Astrocyte of the cerebellum (primary cell): ENCODE measurements at regions of chr5 and their contacts with region 1.

Region 1: DNA sequence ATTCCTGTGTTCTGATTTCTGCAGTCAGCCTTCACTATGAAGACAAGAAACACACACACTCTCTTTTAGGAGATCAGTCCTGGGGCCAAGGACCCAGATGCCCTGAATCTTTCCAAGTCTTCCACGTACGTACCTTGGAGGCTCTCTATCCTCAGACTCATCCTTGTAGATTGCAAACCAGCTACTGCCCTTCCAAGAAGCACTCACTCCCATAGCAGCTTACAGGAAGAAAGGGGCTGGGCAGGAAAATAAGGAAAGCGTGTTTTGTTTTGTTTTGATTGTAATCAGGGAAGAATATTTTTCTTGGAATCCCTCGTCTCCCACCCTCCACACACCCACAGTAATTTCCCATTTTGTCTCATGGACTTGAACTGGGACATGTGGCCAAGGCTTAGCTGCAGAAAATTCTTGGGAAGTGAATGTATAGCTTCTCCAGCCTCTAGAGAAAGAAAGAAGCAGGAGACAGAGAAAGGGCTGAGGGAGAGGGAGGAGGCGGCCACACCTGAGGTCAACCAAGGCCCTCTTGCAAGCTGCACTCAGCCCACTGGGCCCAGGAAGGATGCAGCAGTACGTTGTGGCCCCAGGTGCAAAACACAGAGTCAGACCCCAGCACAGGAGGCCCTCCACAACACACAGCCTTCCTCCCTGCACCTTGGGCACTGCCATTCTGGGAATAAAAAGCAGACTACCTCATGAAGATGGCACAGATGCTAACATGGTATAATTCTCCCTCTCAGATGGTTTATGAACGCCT is 29.9 kb downstream of the IRX2 start:
- DNase-seq: no peak
- H3K4me3 ChIP-seq: no peak overlapping the region
- CTCF ChIP-seq: no peak

Region 2: GRCh38 chr5:2634008-2634407 is 87.6 kb before region 1 on chr5:
- in situ Hi-C with region 1: no loop called
- DNase-seq: no peak
- H3K4me3 ChIP-seq: no peak overlapping the region
- CTCF ChIP-seq: no peak

Region 3: DNA sequence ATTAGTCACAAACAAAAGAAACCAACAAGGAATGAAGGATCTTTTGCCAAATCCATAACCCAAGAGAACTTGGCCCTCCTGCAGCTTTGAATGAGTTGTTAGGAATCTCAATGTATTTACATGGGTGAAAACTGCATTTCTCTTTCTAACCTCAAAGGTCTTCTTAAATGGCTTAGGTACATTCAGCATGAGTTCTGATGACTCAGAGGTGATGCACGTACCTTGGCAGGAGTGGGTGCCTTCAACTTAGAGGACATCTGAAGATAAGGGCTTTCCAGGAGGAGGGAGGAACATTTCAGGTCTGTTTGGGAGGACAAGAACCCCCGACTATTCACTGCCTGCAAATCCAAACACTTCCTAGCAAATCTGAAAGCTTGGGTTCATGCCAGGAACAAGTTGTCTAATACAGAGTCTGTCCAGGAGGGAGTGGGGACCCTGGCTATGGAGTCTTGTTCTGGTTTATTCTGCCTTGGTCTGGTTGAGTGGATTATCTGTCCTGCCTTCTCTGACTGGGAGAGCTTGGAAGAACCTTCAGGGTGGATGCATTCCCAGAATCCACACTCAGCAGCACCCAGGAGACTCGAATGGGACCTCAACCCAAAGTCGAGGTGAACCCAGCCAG is 35.8 kb before region 1 on chr5:
- in situ Hi-C with region 1: loop called (anchors 5 kb)
- DNase-seq: peak; percentile 95
- H3K4me3 ChIP-seq: no peak overlapping the region
- CTCF ChIP-seq: no peak

Region 4: DNA sequence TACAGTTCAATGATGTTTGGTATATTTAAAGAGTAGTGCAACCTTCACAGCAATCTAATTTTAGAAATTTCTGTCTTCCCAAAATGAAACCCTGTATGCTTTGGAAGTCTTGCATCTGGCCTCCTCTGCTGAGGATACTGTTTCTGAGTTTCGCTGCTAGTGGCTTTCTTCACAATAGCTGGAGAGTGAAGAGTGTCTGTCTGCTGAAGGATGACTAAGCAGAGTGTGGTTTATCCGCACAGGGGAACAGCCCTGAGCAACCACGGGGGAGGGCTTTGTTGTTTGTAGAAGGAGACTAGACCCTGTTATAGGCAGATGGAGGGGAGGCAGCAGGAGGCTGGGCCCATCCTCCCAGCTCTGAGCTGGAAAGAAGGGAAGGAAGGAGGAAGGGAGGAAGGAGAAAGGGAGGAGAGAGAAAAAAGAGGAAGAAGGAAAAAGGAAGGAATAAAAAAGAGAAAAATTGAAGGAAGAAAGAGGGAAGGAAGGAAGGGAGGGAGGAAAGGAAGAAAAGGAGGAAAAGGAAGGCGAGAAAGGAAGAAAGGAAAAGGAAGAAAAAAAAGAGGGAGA is 40.4 kb after region 1 on chr5:
- in situ Hi-C with region 1: no loop called
- DNase-seq: no peak
- H3K4me3 ChIP-seq: no peak overlapping the region
- CTCF ChIP-seq: no peak